WTC11 (cell line): ENCODE measurements at regions of chr1 and their contacts with region 1.

Region 1: DNA sequence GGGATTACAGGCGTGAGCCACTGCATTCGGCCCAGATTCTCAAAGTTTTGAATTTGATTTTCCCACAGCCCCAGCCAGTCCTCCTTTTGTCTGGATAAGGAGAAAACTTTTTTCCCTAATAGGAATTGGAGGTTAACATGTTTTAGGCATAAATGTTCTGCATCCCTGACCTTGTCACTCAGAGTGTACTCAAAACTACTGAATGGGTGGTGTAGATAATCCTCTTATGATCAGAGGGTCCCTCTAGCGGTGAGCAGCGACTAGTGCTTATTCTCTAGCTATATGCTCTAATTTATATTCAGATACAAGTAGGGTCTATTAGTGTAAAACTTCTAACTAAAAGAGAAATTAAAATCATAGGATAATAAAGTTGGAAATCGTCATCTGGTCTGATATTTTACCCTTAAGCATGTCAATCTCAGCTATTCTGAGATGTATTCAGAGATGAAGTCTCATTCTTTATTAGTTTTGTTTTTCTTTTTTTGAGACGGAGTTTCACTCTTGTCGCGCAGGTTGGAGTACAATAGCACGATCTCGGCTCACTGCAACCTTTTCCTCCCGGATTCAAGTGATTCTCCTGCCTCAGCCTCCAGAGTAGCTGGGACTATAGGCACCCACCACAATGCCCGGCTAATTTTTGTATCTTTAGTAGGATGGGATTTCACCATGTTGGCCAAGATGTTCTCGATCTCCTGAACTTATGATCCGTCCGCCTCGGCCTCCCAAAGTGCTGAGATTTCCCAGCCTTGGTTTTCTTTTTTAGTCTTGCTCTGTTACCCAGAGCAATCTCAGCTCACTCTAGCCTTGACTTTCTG is 2.7 kb upstream of the PSMD4 start:
- DNase-seq: peak; percentile 54
- ATAC-seq: peak; percentile 46
- H3K4me3 Mint-ChIP-seq: no peak overlapping the region
- H3K27ac Mint-ChIP-seq: 0 out of 2 replicates have a peak overlapping the region, but pooled peaks have one; percentile 63
- H3K4me1 Mint-ChIP-seq: peaks cover 9% of the 10 kb centered on the region
- H3K27me3 Mint-ChIP-seq: no peaks in the 10 kb centered on the region; the same call in 1 of the 2 replicates
- CTCF ChIP-seq: peak; percentile 58

Region 2: DNA sequence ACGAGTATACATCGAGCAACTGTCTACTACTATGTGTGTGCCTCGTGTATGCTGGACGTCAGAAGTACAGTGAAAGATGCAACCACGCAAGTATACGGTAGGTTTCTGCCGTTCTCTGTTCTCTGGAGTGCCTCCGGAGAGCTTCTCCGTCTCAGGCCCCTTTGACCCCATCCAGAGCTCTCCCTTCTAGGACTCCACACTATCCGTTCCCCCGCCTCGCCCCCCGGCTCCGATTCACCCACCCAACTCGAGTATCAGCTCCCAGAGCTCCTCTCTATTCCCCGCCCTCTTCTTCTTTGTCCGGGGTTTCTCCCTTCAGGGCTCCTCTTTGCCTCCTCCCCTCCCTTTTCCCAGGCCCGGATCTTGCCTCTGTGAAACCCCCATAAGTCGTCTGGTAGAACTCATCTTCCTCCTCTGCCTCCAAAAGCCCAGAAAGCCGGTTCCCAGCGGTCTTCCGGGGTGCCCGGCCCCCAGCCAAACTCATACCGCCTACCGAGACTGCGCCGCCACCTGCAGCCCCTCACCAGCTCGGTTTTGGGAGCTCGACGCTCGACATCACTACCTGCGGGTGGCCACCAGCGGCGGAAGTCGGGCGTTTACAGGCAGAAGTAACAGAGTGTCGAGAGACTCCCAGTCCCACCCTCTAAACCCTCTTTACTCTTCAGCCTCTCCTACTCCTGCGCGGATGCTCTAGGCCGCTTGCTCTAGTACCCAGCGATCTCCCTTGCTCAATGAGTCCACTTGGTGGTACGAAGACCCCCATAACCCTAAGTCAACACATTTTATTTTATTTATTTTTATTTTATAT is 62.0 kb before region 1 on chr1 and contains the start of gene VPS72:
- CTCF ChIA-PET with region 1: interaction called, 10 read pairs
- POLR2A ChIA-PET with region 1: no interaction called
- DNase-seq: peak; percentile 83
- ATAC-seq: peak; percentile 93
- H3K4me3 Mint-ChIP-seq: peak within 1 kb of the TSS; percentile 99
- H3K27ac Mint-ChIP-seq: peak within 1 kb of the TSS; percentile 97
- H3K4me1 Mint-ChIP-seq: peaks cover 9% of the 10 kb centered on the region
- H3K27me3 Mint-ChIP-seq: no peaks in the 10 kb centered on the region; the same call in 1 of the 2 replicates
- CTCF ChIP-seq: no peak
- total RNA-seq, gene VPS72: 87.2 to 103 TPM (median 97.6 TPM) in 3 replicates

Region 3: DNA sequence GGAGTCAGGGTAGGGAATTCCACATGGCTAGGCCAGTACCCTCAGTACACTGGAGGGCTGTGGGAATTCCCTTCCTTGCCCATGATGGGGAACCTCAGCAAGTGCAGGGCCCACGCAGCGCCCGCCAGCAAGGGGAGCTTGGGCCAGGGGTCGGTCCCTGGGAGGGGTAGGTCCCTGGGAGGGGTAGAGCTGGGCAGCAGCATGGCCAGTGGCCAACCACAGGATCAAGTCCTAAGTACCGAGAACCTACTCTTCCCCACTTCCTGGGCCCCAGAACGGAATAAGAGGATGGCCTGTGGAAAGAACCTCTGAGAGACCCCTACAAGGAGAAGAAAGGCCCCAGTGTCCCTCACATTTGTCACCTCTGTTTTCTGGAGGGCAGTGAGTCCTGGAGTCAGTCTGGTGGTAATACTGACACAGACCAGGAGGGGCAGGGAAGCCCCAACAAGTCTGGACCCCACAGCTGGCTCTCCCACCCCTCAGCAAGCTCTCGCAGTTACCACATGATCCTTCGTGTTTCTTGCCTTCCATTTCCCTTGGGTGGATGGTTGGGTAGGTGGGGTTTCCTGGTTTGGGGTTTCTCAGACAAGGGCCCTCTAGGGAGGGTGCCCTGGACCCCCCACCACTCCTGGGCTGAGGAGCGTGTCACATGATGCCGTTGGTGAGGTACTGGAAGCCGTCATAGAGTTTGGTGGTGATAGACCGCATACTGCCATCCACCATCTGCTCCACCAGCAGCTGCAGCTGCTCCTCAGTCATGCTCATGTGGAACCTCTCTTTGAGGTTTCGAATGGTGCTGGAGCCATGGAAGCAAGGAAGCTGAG is 40.6 kb after region 1 on chr1:
- CTCF ChIA-PET with region 1: interaction called, 11 read pairs
- POLR2A ChIA-PET with region 1: no interaction called
- DNase-seq: no peak
- ATAC-seq: peak; percentile 43
- H3K4me3 Mint-ChIP-seq: no peak overlapping the region
- H3K27ac Mint-ChIP-seq: no peak overlapping the region; the same call in 1 of the 2 replicates
- H3K4me1 Mint-ChIP-seq: peaks cover 30% of the 10 kb centered on the region
- H3K27me3 Mint-ChIP-seq: no peaks in the 10 kb centered on the region
- CTCF ChIP-seq: no peak